ENCODE measurements at regions of chr9 and their contacts with region 1.

Region 1: GRCh38 chr9:33721674-33722358 is 73.5 kb upstream of the PRSS3 start:
- DNase-seq: peak; percentile 83
- H3K4me3 ChIP-seq: no peak overlapping the region
- H3K27ac ChIP-seq: no peak overlapping the region
- H3K4me1 ChIP-seq: peaks cover 4% of the 10 kb centered on the region
- H3K27me3 ChIP-seq: no peaks in the 10 kb centered on the region
- CTCF ChIP-seq: peak; percentile 98 to 100 (median 100)
- POLR2A ChIP-seq: no peak

Region 2: GRCh38 chr9:33225319-33226149 is 496.3 kb before region 1 on chr9:
- intact Hi-C with region 1: no loop called
- DNase-seq: peak; percentile 78
- H3K4me3 ChIP-seq: no peak overlapping the region
- H3K27ac ChIP-seq: no peak overlapping the region
- H3K4me1 ChIP-seq: no peaks in the 10 kb centered on the region
- H3K27me3 ChIP-seq: no peaks in the 10 kb centered on the region
- CTCF ChIP-seq: peak; percentile 59 to 97 (median 94)
- POLR2A ChIP-seq: no peak

Region 3: GRCh38 chr9:33623658-33624586 is 97.9 kb before region 1 on chr9:
- intact Hi-C with region 1: loop called (anchors 2 kb)
- DNase-seq: peak; percentile 74
- H3K4me3 ChIP-seq: no peak overlapping the region
- H3K27ac ChIP-seq: no peak overlapping the region
- H3K4me1 ChIP-seq: no peaks in the 10 kb centered on the region
- H3K27me3 ChIP-seq: no peaks in the 10 kb centered on the region
- CTCF ChIP-seq: peak; percentile 63 to 92 (median 90)
- POLR2A ChIP-seq: no peak

Measured in prostate gland (tissue), 2 donors.